ENCODE measurements at regions of chr1 and their contacts with region 1.

Region 1: GRCh38 chr1:212782422-212783154 is 9.0 kb downstream of the NSL1 start:
- DNase-seq: peak in 6 of 9 donors; percentile 4 to 45 (median 34)
- ATAC-seq: peak; percentile 73
- H3K4me3 ChIP-seq: no peak overlapping the region
- H3K4me3 Mint-ChIP-seq: no peak overlapping the region
- H3K27ac ChIP-seq: no peak overlapping the region
- H3K27ac Mint-ChIP-seq: peak overlapping the region in 1 of 9 donors; percentile 31
- H3K4me1 ChIP-seq: no peaks in the 10 kb centered on the region
- H3K4me1 Mint-ChIP-seq: peaks cover 0 to 18% (median 6%) of the 10 kb centered on the region in 7 donors
- H3K27me3 ChIP-seq: no peaks in the 10 kb centered on the region
- H3K27me3 Mint-ChIP-seq: no peaks in the 10 kb centered on the region

Region 2: DNA sequence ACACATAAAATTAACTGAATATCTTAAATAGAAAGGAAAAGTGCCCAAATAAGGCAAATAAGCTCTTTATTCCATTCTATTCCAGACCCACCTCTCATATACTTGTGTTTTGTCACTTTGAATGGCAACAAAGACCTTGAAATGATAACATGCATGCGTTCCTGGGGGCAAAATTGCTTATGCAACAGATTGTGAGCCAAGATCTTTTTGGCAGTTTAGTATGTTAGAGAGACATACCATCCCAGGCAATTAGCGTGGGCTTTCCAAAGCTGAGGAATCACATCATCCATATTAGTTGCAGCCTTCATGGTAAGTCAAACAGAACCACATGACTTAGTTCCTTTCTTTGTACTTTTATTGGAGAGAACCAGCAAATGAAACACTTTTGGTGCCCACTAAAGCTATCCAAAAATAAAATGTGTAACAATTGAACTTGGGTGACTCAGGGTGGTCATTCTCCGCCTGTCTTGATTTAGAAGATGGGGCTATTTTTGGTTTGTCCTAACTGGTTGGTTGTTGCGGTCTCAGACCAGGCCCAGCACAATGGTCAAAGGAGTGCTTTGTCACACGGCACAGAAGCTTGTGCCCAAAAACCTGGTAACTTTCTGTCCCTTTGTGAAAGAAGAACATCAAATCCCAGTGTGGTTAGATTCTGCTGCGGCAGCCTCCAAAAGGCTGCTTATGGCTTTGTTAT is 242.7 kb before region 1 on chr1:
- CTCF ChIA-PET with region 1: no interaction called
- POLR2A ChIA-PET with region 1: no interaction called
- intact Hi-C with region 1: no loop called
- DNase-seq: no peak
- ATAC-seq: no peak
- H3K4me3 ChIP-seq: no peak overlapping the region
- H3K4me3 Mint-ChIP-seq: no peak overlapping the region
- H3K27ac ChIP-seq: no peak overlapping the region
- H3K27ac Mint-ChIP-seq: no peak overlapping the region
- H3K4me1 ChIP-seq: no peaks in the 10 kb centered on the region
- H3K4me1 Mint-ChIP-seq: no peaks in the 10 kb centered on the region
- H3K27me3 ChIP-seq: no peaks in the 10 kb centered on the region
- H3K27me3 Mint-ChIP-seq: peaks cover 0 to 30% (median 17%) of the 10 kb centered on the region in 5 donors

Region 3: GRCh38 chr1:212760126-212760823 is 22.3 kb before region 1 on chr1:
- CTCF ChIA-PET with region 1: interaction called, 8 read pairs
- POLR2A ChIA-PET with region 1: no interaction called
- intact Hi-C with region 1: loop called in 1 of 2 experiments (anchors 2 kb)
- DNase-seq: peak in 7 of 9 donors; percentile 16 to 49 (median 41)
- ATAC-seq: peak; percentile 87
- H3K4me3 ChIP-seq: no peak overlapping the region
- H3K4me3 Mint-ChIP-seq: peak overlapping the region in 1 of 10 donors; percentile 21
- H3K27ac ChIP-seq: no peak overlapping the region
- H3K27ac Mint-ChIP-seq: peak overlapping the region in 1 of 9 donors; percentile 25
- H3K4me1 ChIP-seq: no peaks in the 10 kb centered on the region
- H3K4me1 Mint-ChIP-seq: peaks cover 8 to 64% (median 30%) of the 10 kb centered on the region in 7 donors
- H3K27me3 ChIP-seq: no peaks in the 10 kb centered on the region
- H3K27me3 Mint-ChIP-seq: no peaks in the 10 kb centered on the region

Region 4: DNA sequence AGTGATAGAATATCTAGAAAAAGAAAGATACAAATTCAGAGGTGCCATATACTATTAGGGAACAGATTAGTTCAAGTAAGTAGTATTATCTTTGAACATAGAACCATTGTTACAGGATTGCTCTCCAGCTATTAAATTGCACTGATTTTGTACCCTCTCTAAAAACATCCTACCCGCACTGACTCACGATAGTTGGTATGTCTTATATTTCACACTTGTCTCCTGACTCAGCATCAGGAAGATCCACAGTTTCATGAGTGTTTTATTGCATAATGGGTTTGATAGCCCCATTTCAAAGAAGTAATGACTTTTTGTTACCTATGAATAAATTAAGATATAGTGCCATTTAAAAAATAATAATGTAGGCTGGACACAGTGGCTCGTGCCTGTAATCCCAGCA is 15.1 kb after region 1 on chr1:
- CTCF ChIA-PET with region 1: no interaction called
- POLR2A ChIA-PET with region 1: no interaction called
- intact Hi-C with region 1: loop called in 1 of 2 experiments (anchors 2 kb)
- DNase-seq: no peak
- ATAC-seq: no peak
- H3K4me3 ChIP-seq: no peak overlapping the region
- H3K4me3 Mint-ChIP-seq: no peak overlapping the region
- H3K27ac ChIP-seq: no peak overlapping the region
- H3K27ac Mint-ChIP-seq: no peak overlapping the region
- H3K4me1 ChIP-seq: peaks cover 2 to 10% of the 10 kb centered on the region in 2 donors
- H3K4me1 Mint-ChIP-seq: peaks cover 15 to 21% (median 17%) of the 10 kb centered on the region in 7 donors
- H3K27me3 ChIP-seq: no peaks in the 10 kb centered on the region
- H3K27me3 Mint-ChIP-seq: no peaks in the 10 kb centered on the region

Region 5: DNA sequence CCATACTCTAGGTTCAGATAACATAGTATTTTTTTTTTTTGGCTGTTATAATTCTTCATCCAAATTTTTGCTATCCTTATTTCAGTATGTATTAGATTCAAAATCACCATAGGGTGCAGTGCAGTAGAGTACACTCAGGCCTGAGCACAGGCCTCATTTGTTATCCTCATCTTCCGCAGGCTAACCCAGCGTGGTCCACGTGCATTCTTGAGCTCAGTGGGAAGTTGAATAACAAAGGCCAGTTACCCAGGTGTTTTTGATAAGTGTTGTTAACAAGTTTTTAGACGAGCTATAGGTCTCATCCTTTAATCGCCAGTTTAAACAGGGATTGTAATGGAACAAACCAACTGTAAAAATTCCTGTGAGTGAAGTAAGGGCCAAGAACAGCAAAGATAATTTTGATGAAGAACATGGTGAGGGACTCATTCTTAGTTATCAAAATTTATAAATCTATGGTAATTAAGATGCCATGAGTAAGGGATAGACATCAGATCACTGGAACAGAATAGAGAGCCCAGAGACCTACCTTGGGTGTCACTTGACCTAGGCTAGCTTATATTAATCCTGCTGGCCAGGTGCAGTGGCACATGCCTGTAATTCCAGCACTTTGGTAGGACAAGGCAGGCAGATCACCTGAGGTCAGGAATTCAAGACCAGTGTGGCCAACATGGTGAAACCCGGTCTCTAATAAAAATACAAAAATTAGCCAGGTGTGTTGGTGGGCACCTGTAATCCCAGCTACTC is 97.5 kb after region 1 on chr1:
- CTCF ChIA-PET with region 1: no interaction called
- POLR2A ChIA-PET with region 1: no interaction called
- intact Hi-C with region 1: no loop called
- DNase-seq: no peak
- ATAC-seq: no peak
- H3K4me3 ChIP-seq: no peak overlapping the region
- H3K4me3 Mint-ChIP-seq: no peak overlapping the region
- H3K27ac ChIP-seq: no peak overlapping the region
- H3K27ac Mint-ChIP-seq: no peak overlapping the region
- H3K4me1 ChIP-seq: no peaks in the 10 kb centered on the region
- H3K4me1 Mint-ChIP-seq: peaks cover 0 to 2% (median 0%) of the 10 kb centered on the region in 7 donors
- H3K27me3 ChIP-seq: no peaks in the 10 kb centered on the region
- H3K27me3 Mint-ChIP-seq: no peaks in the 10 kb centered on the region

Region 6: GRCh38 chr1:212994926-212995325 is 212.3 kb after region 1 on chr1:
- CTCF ChIA-PET with region 1: no interaction called
- POLR2A ChIA-PET with region 1: no interaction called
- intact Hi-C with region 1: loop called (anchors 1 to 2 kb)
- DNase-seq: no peak
- ATAC-seq: no peak
- H3K4me3 ChIP-seq: no peak overlapping the region
- H3K4me3 Mint-ChIP-seq: no peak overlapping the region
- H3K27ac ChIP-seq: no peak overlapping the region
- H3K27ac Mint-ChIP-seq: no peak overlapping the region
- H3K4me1 ChIP-seq: no peaks in the 10 kb centered on the region
- H3K4me1 Mint-ChIP-seq: peaks cover 0 to 12% (median 7%) of the 10 kb centered on the region in 7 donors
- H3K27me3 ChIP-seq: no peaks in the 10 kb centered on the region
- H3K27me3 Mint-ChIP-seq: no peaks in the 10 kb centered on the region

Measured in naive thymus-derived CD4-positive, alpha-beta T cell (primary cell).